ENCODE measurements at regions of chr7 and their contacts with region 1.

Region 1: GRCh38 chr7:75642810-75643486 is 95.8 kb downstream of the HIP1 start:
- DNase-seq: peak in 2 of 3 donors; percentile 35 to 68
- ATAC-seq: peak in 1 of 2 donors; percentile 40
- H3K4me3 ChIP-seq: no peak overlapping the region
- H3K27ac ChIP-seq: no peak overlapping the region
- H3K4me1 ChIP-seq: no peaks in the 10 kb centered on the region
- H3K27me3 ChIP-seq: no peaks in the 10 kb centered on the region

Region 2: DNA sequence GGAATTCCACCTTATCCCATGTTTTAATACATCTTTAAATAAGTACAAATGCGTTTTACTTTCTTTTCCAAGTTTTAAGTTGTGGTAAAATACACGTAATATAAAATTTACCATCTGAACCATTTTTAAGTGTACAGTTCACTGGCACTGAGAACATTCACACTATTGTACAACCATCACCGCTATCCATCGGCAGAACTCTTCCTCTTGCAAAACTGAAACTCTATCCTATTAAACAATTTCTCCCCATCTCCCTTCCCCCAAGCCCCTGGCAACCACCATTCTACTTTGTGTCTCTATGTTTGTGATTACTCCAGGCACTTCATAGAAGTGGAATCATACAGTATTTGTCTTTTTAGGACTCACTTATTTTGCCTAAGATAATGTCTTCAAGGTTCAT is 62.0 kb after region 1 on chr7:
- intact Hi-C with region 1: loop called in 1 of 4 experiments (anchors 10 kb)
- DNase-seq: no peak
- ATAC-seq: no peak
- H3K4me3 ChIP-seq: no peak overlapping the region
- H3K27ac ChIP-seq: no peak overlapping the region
- H3K4me1 ChIP-seq: no peaks in the 10 kb centered on the region
- H3K27me3 ChIP-seq: no peaks in the 10 kb centered on the region

Region 3: DNA sequence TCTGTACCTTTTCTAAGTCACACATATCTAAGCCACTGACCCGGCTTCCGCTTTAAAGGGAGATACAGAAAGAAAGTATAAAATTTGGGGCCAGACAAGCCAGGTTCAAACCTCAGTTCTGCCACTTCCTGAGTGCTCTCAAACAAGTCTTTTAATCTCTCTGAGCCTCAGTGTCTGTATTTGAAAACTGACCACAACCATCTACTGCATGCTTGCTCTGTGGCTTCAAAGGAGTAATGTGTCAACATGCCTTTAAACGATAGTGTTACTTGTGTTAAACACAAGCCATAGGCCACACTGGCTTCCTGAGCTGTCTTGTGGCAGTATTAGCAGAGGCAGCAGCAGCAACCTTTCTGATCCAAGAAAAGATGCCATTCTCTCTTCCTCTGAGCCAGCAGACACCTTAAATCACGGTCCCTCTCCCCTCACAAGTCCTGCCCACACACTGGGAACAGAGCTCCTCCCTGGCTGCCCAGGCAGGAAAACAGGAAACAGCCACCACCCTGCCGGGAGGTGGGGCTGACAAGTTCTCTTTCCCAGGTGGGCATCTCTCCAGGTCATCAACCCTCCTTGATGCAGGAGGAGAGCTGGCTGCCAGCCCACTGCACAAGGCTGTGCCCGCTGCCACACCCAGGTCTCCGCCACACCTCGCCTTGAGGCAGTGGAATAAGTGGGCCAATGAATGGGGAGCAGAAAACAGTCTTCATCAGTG is 85.1 kb after region 1 on chr7:
- intact Hi-C with region 1: loop called in 1 of 4 experiments (anchors 10 kb)
- DNase-seq: peak in 2 of 3 donors; percentile 17 to 67
- ATAC-seq: peak; percentile 76 to 77
- H3K4me3 ChIP-seq: no peak overlapping the region
- H3K27ac ChIP-seq: no peak overlapping the region
- H3K4me1 ChIP-seq: peaks cover 5% of the 10 kb centered on the region
- H3K27me3 ChIP-seq: no peaks in the 10 kb centered on the region

Region 4: GRCh38 chr7:76086070-76086469 is 443.1 kb after region 1 on chr7:
- intact Hi-C with region 1: no loop called
- DNase-seq: no peak
- ATAC-seq: no peak
- H3K4me3 ChIP-seq: no peak overlapping the region
- H3K27ac ChIP-seq: no peak overlapping the region
- H3K4me1 ChIP-seq: peaks cover 7% of the 10 kb centered on the region
- H3K27me3 ChIP-seq: no peaks in the 10 kb centered on the region

Measured in right cardiac atrium (tissue), 5 donors.